ENCODE measurements at regions of chr9 and their contacts with region 1.

Region 1: GRCh38 chr9:33473643-33474352 is at the start of gene NOL6:
- DNase-seq: peak; percentile 99
- ATAC-seq: peak; percentile 99
- H3K4me3 ChIP-seq: peak within 1 kb of the TSS; percentile 57
- H3K27ac ChIP-seq: peak within 1 kb of the TSS; percentile 57
- H3K4me1 ChIP-seq: peaks cover 3% of the 10 kb centered on the region; the same call in 1 of the 2 replicates
- H3K27me3 ChIP-seq: no peaks in the 10 kb centered on the region
- CTCF ChIP-seq: no peak
- POLR2A ChIP-seq: peak; percentile 95
- RAD21 ChIP-seq: no peak
- total RNA-seq, gene NOL6: 42.8 and 47.3 TPM in 2 replicates

Region 2: GRCh38 chr9:33498387-33498786 is 24.6 kb after region 1 on chr9:
- CTCF ChIA-PET with region 1: no interaction called
- POLR2A ChIA-PET with region 1: no interaction called
- dilution Hi-C with region 1: no loop called
- in situ Hi-C with region 1: no loop called
- intact Hi-C with region 1: no loop called
- DNase-seq: peak; percentile 20
- ATAC-seq: peak; percentile 67; the same call in 1 of the 2 replicates
- H3K4me3 ChIP-seq: no peak overlapping the region
- H3K27ac ChIP-seq: no peak overlapping the region
- H3K4me1 ChIP-seq: no peaks in the 10 kb centered on the region
- H3K27me3 ChIP-seq: no peaks in the 10 kb centered on the region
- CTCF ChIP-seq: peak; percentile 36
- POLR2A ChIP-seq: no peak
- RAD21 ChIP-seq: 0 out of 2 replicates have a peak, but pooled peaks have one; percentile 5

Region 3: GRCh38 chr9:33517373-33517772 is 43.6 kb after region 1 on chr9:
- CTCF ChIA-PET with region 1: interaction called, 7 read pairs
- POLR2A ChIA-PET with region 1: no interaction called
- dilution Hi-C with region 1: no loop called
- in situ Hi-C with region 1: no loop called
- intact Hi-C with region 1: loop called (anchors 5 kb)
- DNase-seq: peak; percentile 60
- ATAC-seq: peak; percentile 71
- H3K4me3 ChIP-seq: no peak overlapping the region
- H3K27ac ChIP-seq: no peak overlapping the region
- H3K4me1 ChIP-seq: no peaks in the 10 kb centered on the region; the same call in 1 of the 2 replicates
- H3K27me3 ChIP-seq: no peaks in the 10 kb centered on the region
- CTCF ChIP-seq: peak; percentile 67
- POLR2A ChIP-seq: no peak
- RAD21 ChIP-seq: peak; percentile 53

Region 4: DNA sequence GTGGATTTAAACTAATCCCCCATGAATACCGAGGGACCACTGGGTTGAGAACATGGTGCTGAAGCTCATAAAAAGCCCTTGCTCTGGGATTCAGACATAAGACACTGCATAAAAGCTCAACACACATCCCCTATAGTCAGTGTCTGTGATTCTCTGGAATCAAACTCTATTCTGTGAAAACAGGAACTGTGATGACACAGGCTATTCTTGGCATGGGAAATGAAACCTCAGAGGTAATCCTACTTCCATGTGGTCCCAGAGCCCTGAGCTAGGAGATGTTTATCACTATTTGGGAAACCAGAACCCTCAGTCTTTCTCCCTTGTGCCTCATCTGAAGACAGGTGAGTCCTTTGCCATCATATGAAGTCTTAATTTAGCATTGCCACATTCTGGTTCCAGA is 186.1 kb after region 1 on chr9:
- CTCF ChIA-PET with region 1: no interaction called
- POLR2A ChIA-PET with region 1: no interaction called
- dilution Hi-C with region 1: no loop called
- in situ Hi-C with region 1: no loop called
- intact Hi-C with region 1: no loop called
- DNase-seq: no peak
- ATAC-seq: no peak
- H3K4me3 ChIP-seq: no peak overlapping the region
- H3K27ac ChIP-seq: no peak overlapping the region
- H3K4me1 ChIP-seq: no peaks in the 10 kb centered on the region
- H3K27me3 ChIP-seq: peaks cover 16% of the 10 kb centered on the region
- CTCF ChIP-seq: no peak
- POLR2A ChIP-seq: no peak
- RAD21 ChIP-seq: no peak

Measured in IMR-90 (cell line).